SK-N-SH (cell line): ENCODE measurements at regions of chr11 and their contacts with region 1.

Region 1: GRCh38 chr11:128956401-128957201 is 13.9 kb upstream of the TP53AIP1 start:
- DNase-seq: peak; percentile 78
- H3K4me3 ChIP-seq: no peak overlapping the region; a peak in 1 of 4 replicates
- H3K27ac ChIP-seq: no peak overlapping the region
- H3K4me1 ChIP-seq: no peaks in the 10 kb centered on the region; a peak in 1 of 4 replicates
- H3K27me3 ChIP-seq: no peaks in the 10 kb centered on the region
- CTCF ChIP-seq: peak; percentile 81
- EP300 ChIP-seq: no peak
- RAD21 ChIP-seq: peak; percentile 97

Region 2: GRCh38 chr11:128879817-128880216 is 76.8 kb before region 1 on chr11:
- CTCF ChIA-PET with region 1: interaction called, 872 read pairs
- POLR2A ChIA-PET with region 1: no interaction called
- DNase-seq: no peak
- H3K4me3 ChIP-seq: no peak overlapping the region
- H3K27ac ChIP-seq: no peak overlapping the region
- H3K4me1 ChIP-seq: no peaks in the 10 kb centered on the region; a peak in 1 of 4 replicates
- H3K27me3 ChIP-seq: peaks cover 6% of the 10 kb centered on the region; the same call in 1 of the 2 replicates
- CTCF ChIP-seq: no peak
- EP300 ChIP-seq: no peak
- RAD21 ChIP-seq: no peak

Region 3: GRCh38 chr11:128905345-128906184 is 51.0 kb before region 1 on chr11:
- CTCF ChIA-PET with region 1: interaction called, 89 read pairs
- POLR2A ChIA-PET with region 1: no interaction called
- DNase-seq: peak; percentile 86
- H3K4me3 ChIP-seq: peak overlapping the region; percentile 46 to 53
- H3K27ac ChIP-seq: no peak overlapping the region; a peak in 1 of 4 replicates
- H3K4me1 ChIP-seq: peaks cover 16 to 26% of the 10 kb centered on the region in 2 experiments; a peak in 3 of 4 replicates
- H3K27me3 ChIP-seq: no peaks in the 10 kb centered on the region
- CTCF ChIP-seq: peak; percentile 54
- EP300 ChIP-seq: no peak
- RAD21 ChIP-seq: no peak

Region 4: DNA sequence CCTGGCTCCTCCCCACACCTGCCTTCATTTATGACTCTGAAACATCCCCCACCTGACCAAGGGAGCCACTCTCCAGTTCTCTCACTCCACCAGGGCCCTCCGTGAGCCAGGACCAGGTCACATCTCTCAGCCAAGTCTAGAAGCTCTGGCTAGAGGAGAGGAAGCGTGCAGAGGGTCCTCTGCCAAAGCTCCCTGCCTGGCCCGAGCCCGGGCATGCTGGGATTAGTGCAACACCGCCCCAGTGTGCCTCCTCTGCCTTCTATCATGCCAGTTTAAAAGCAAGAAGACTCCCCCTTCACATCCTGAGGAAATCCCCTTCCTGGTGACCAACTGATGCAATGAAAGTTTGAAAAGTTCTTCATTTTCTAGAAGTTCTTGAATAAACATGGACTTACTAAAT is 37.4 kb before region 1 on chr11:
- CTCF ChIA-PET with region 1: interaction called, 26 read pairs
- POLR2A ChIA-PET with region 1: no interaction called
- DNase-seq: no peak
- H3K4me3 ChIP-seq: no peak overlapping the region
- H3K27ac ChIP-seq: no peak overlapping the region
- H3K4me1 ChIP-seq: no peaks in the 10 kb centered on the region; a peak in 1 of 4 replicates
- H3K27me3 ChIP-seq: peaks cover 5% of the 10 kb centered on the region; the same call in 1 of the 2 replicates
- CTCF ChIP-seq: no peak
- EP300 ChIP-seq: no peak
- RAD21 ChIP-seq: no peak

Region 5: DNA sequence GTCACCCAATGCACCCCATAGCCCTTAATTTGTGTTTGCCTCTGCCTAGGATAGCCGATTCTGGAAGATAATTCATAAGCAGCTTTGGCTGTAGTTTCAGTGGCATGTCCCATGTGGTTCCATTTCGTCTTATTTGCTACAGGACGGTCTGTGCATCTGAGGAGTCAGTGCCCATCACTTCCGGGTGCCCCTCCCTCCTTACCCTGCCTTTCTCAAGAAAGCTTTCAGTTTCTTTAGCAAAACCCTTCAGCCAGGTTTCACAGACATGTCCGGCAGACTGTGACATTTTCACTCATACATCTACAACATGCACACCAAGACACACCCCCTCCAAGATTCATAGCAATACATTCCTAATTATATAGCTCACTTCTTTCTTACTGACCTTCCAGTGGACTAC is 28.2 kb before region 1 on chr11:
- CTCF ChIA-PET with region 1: interaction called, 36 read pairs
- POLR2A ChIA-PET with region 1: no interaction called
- DNase-seq: no peak
- H3K4me3 ChIP-seq: no peak overlapping the region
- H3K27ac ChIP-seq: no peak overlapping the region
- H3K4me1 ChIP-seq: peaks cover 0 to 7% of the 10 kb centered on the region in 2 experiments; a peak in 1 of 4 replicates
- H3K27me3 ChIP-seq: peaks cover 5% of the 10 kb centered on the region; the same call in 1 of the 2 replicates
- CTCF ChIP-seq: no peak
- EP300 ChIP-seq: no peak
- RAD21 ChIP-seq: no peak

Region 6: DNA sequence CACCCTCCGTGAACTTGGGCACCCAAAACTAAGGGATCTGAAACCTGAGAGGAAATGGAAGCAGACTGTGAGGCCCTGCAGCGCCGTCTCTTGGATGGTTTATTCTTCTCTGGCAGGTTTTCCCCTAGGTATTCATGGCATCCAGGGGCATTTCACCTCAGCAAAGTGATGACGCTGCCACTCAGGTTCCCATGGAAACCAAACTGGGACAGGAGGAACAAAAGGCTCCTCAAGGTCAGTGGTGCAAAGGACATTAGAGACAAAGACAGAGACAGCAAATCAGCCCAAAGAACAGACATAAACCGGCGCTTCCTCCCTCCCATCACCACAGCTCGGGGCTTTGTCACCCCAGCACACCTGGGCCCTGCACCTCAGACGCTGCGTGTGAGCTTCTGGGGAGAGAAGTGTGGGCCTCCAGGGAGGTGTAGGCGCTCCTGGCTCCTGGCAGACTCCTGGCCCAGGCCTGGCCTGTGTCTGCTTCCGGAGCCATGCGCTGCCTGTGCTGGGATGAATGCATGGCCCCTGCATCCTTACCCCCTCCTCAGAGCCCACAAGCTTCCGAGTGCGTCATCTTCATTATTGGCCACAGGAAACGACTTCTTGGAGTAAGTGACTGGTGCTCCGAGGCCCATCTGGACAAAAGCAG is 19.9 kb before region 1 on chr11:
- CTCF ChIA-PET with region 1: interaction called, 113 read pairs
- POLR2A ChIA-PET with region 1: no interaction called
- DNase-seq: no peak
- H3K4me3 ChIP-seq: no peak overlapping the region
- H3K27ac ChIP-seq: no peak overlapping the region
- H3K4me1 ChIP-seq: peaks cover 0 to 9% of the 10 kb centered on the region in 2 experiments; a peak in 1 of 4 replicates
- H3K27me3 ChIP-seq: no peaks in the 10 kb centered on the region
- CTCF ChIP-seq: no peak
- EP300 ChIP-seq: no peak
- RAD21 ChIP-seq: no peak

Region 7: DNA sequence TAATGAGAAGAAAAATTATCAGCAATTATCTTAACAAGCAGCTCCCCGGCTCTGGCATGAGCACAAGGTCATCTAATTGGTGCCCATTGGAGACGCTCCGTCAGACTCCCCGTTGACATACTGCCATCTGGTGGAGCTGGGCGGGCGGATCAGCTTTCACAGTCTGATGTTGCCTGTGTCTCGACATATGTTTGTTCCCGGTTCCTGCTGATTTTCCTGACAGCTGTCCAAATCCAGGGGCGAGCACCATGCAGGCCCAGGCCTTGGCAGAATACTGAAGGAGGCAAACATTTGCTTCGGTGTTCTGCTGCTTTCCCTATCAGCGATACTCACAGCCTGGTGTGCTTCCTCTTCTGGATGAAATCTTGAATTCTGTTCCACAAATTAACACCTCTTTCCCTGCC is 375.3 kb after region 1 on chr11:
- CTCF ChIA-PET with region 1: interaction called, 12 read pairs
- POLR2A ChIA-PET with region 1: no interaction called
- DNase-seq: peak; percentile 77
- H3K4me3 ChIP-seq: peak overlapping the region in 1 of 2 experiments; percentile 2; a peak in 1 of 4 replicates
- H3K27ac ChIP-seq: no peak overlapping the region
- H3K4me1 ChIP-seq: no peaks in the 10 kb centered on the region; a peak in 1 of 4 replicates
- H3K27me3 ChIP-seq: no peaks in the 10 kb centered on the region
- CTCF ChIP-seq: peak; percentile 92
- EP300 ChIP-seq: no peak
- RAD21 ChIP-seq: peak; percentile 94